Calu3 (cell line): ENCODE measurements at regions of chr3 and their contacts with region 1.

Region 1: DNA sequence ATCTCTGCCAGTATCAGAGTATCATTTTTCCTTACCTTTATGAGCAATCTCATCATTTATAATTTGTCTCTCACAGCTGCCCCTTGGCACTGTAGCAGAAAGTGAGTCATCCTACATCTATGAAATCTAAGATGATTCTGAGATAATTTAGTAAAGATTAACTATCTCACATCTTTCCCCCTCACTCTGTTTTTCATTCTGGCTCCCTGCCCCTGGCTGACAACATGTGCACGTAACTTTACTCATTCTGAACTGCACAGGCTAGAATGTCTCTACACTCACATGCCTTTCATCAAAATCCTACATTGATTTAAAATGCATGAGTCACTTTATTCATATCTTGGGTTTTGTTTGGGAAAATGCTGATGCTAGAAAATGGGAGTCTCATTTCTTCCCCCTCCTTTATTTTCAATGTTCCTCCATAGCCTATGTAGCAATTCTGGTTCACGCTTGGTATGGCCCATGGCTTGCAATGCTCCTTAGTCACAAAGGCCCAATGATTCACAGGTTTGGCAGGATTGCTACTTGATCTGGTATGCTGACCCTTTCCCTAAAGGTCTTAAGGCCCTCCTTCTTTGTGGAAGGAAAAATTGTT is 838.5 kb downstream of the TUSC7 start:
- DNase-seq: peak; percentile 54
- H3K4me3 Mint-ChIP-seq: peak overlapping the region; percentile 20
- H3K27ac Mint-ChIP-seq: peak overlapping the region; percentile 28
- H3K4me1 Mint-ChIP-seq: peaks cover 45% of the 10 kb centered on the region
- H3K27me3 Mint-ChIP-seq: no peaks in the 10 kb centered on the region
- CTCF ChIP-seq: no peak

Region 2: GRCh38 chr3:117719316-117719926 is 171.4 kb after region 1 on chr3:
- CTCF ChIA-PET with region 1: no interaction called
- intact Hi-C with region 1: loop called (anchors 5 kb)
- DNase-seq: peak; percentile 18
- H3K4me3 Mint-ChIP-seq: no peak overlapping the region
- H3K27ac Mint-ChIP-seq: no peak overlapping the region
- H3K4me1 Mint-ChIP-seq: no peaks in the 10 kb centered on the region
- H3K27me3 Mint-ChIP-seq: no peaks in the 10 kb centered on the region
- CTCF ChIP-seq: peak; percentile 37